ENCODE measurements at regions of chr14 and their contacts with region 1.

Region 1: GRCh38 chr14:96741151-96741977 is 55.8 kb upstream of the VRK1 start:
- DNase-seq: peak; percentile 45 to 76
- ATAC-seq: peak; percentile 60 to 83 (median 66)
- H3K4me3 ChIP-seq: peak overlapping the region; percentile 35
- H3K27ac ChIP-seq: no peak overlapping the region
- H3K4me1 ChIP-seq: no peaks in the 10 kb centered on the region
- H3K27me3 ChIP-seq: peaks cover 0 to 61% (median 17%) of the 10 kb centered on the region in 3 donors
- CTCF ChIP-seq: peak; percentile 79

Region 2: DNA sequence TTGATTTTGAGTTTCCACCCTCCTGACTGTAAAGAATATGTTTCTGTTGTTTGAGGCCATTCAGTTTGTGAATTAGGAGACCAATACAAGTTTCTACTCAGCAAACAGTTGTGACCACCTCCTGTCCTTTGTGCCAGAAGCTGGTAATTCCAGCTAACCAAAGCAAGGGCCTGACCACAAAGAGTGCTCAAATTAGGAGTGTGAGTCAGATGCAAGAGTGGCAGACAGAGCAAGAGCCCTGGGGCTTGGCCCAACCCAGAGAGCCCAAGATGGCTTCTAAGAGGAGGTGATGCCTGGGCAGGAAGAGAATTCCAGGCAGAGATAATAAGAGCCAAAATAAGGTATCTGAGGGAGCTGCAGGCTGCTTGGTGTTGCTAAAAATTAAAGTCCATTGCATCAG is 779.9 kb before region 1 on chr14:
- intact Hi-C with region 1: no loop called
- DNase-seq: no peak
- ATAC-seq: no peak
- H3K4me3 ChIP-seq: no peak overlapping the region
- H3K27ac ChIP-seq: no peak overlapping the region
- H3K4me1 ChIP-seq: no peaks in the 10 kb centered on the region
- H3K27me3 ChIP-seq: no peaks in the 10 kb centered on the region
- CTCF ChIP-seq: no peak

Region 3: GRCh38 chr14:96567289-96567899 is 174.0 kb before region 1 on chr14:
- intact Hi-C with region 1: loop called in 1 of 2 experiments (anchors 1 kb)
- DNase-seq: no peak
- ATAC-seq: peak in 1 of 4 donors; percentile 47
- H3K4me3 ChIP-seq: no peak overlapping the region
- H3K27ac ChIP-seq: no peak overlapping the region
- H3K4me1 ChIP-seq: no peaks in the 10 kb centered on the region
- H3K27me3 ChIP-seq: no peaks in the 10 kb centered on the region
- CTCF ChIP-seq: peak; percentile 47

Region 4: GRCh38 chr14:97224016-97224415 is 482.7 kb after region 1 on chr14:
- intact Hi-C with region 1: no loop called
- DNase-seq: no peak
- ATAC-seq: no peak
- H3K4me3 ChIP-seq: no peak overlapping the region
- H3K27ac ChIP-seq: no peak overlapping the region
- H3K4me1 ChIP-seq: no peaks in the 10 kb centered on the region
- H3K27me3 ChIP-seq: peaks cover 0 to 18% (median 8%) of the 10 kb centered on the region in 3 donors
- CTCF ChIP-seq: no peak

Measured in psoas muscle (tissue), 8 donors.